Endothelial cell of umbilical vein (primary cell): ENCODE measurements at regions of chr15 and their contacts with region 1.

Region 1: GRCh38 chr15:35867356-35867755 is 321.4 kb upstream of the DPH6 start:
- DNase-seq: no peak
- H3K4me3 ChIP-seq: no peak overlapping the region
- H3K27ac ChIP-seq: no peak overlapping the region
- H3K4me1 ChIP-seq: no peaks in the 10 kb centered on the region
- H3K27me3 ChIP-seq: no peaks in the 10 kb centered on the region
- CTCF ChIP-seq: no peak
- POLR2A ChIP-seq: no peak

Region 2: DNA sequence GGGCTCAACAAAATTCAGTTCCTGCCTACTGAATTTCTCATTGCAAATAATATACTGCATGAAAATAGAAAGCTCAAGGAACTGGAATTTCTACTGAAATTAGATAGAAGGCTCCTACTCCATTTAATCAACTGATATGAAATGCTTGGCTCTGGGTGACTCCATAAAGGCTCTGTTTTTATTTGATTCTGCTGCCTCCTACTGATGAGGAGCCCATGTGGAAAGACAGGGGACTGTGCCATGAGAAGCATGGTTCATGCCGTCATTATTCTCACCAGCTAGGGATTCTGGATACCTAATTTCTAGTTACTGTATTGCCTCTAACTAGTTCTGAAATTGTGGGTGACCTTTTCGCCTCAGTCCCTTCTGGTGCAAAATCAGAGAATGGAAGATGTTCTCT is 44.8 kb after region 1 on chr15:
- CTCF ChIA-PET with region 1: no interaction called
- POLR2A ChIA-PET with region 1: no interaction called
- dilution Hi-C with region 1: no loop called
- intact Hi-C with region 1: loop called (anchors 10 kb)
- DNase-seq: peak; percentile 31
- H3K4me3 ChIP-seq: no peak overlapping the region
- H3K27ac ChIP-seq: no peak overlapping the region
- H3K4me1 ChIP-seq: no peaks in the 10 kb centered on the region
- H3K27me3 ChIP-seq: peaks cover 0 to 2% of the 10 kb centered on the region in 2 experiments
- CTCF ChIP-seq: peak in 1 of 2 donors; percentile 8
- POLR2A ChIP-seq: no peak